Stomach (tissue), 19 donors: ENCODE measurements at regions of chr1 and their contacts with region 1.

Region 1: GRCh38 chr1:16946646-16947045 is 24.9 kb downstream of the CROCC start:
- DNase-seq: no peak
- H3K4me3 ChIP-seq: no peak overlapping the region
- H3K27ac ChIP-seq: no peak overlapping the region
- H3K4me1 ChIP-seq: peaks cover 13 to 25% (median 17%) of the 10 kb centered on the region in 4 donors
- H3K27me3 ChIP-seq: no peaks in the 10 kb centered on the region
- CTCF ChIP-seq: no peak
- EP300 ChIP-seq: no peak
- POLR2A ChIP-seq: no peak

Region 2: DNA sequence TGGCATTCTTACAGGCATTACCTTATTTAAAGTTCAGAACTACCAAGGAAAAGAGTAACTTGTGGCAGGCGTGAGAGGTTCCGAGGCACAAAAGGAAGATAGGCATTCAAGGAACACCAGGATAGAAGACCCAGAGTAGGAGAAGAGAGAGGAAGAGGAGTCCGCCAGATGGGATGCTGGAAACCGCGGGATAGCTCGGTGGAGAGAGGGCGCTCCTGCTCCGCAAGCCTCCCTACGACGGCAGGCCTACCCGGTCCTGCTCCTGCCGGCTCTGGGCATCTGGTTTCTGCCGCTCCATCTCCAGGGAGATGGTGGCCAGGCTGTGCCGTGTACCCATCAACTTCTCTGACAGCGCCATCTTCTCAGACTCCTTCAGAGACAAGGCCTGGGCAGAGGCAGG is 327.9 kb before region 1 on chr1:
- intact Hi-C with region 1: loop called (anchors 2 kb)
- DNase-seq: peak in 1 of 2 donors; percentile 29
- H3K4me3 ChIP-seq: no peak overlapping the region
- H3K27ac ChIP-seq: no peak overlapping the region
- H3K4me1 ChIP-seq: peaks cover 20 to 36% (median 29%) of the 10 kb centered on the region in 4 donors
- H3K27me3 ChIP-seq: no peaks in the 10 kb centered on the region
- CTCF ChIP-seq: no peak
- EP300 ChIP-seq: no peak
- POLR2A ChIP-seq: no peak